Activated CD4-positive, alpha-beta T cell treated with anti-CD3 and anti-CD28 coated beads, Interleukin-2, amount 10 ng/mL, durations not matched to agents 24 days and 14 days (primary cell): ENCODE measurements at regions of chr5 and their contacts with region 1.

Region 1: GRCh38 chr5:170225326-170226128 is 7.3 kb upstream of the C5orf58 start:
- DNase-seq: peak; percentile 93
- H3K4me3 Mint-ChIP-seq: no peak overlapping the region
- H3K27ac Mint-ChIP-seq: peak overlapping the region; percentile 16
- H3K4me1 Mint-ChIP-seq: peaks cover 9% of the 10 kb centered on the region
- H3K27me3 Mint-ChIP-seq: no peaks in the 10 kb centered on the region

Region 2: GRCh38 chr5:170338933-170339779 is 113.6 kb after region 1 on chr5:
- intact Hi-C with region 1: loop called (anchors 1 kb)
- DNase-seq: peak; percentile 88
- H3K4me3 Mint-ChIP-seq: no peak overlapping the region
- H3K27ac Mint-ChIP-seq: peak overlapping the region; percentile 55
- H3K4me1 Mint-ChIP-seq: peaks cover 39% of the 10 kb centered on the region
- H3K27me3 Mint-ChIP-seq: no peaks in the 10 kb centered on the region

Region 3: GRCh38 chr5:170420780-170421412 is 195.4 kb after region 1 on chr5:
- intact Hi-C with region 1: loop called (anchors 1 kb)
- DNase-seq: peak; percentile 85
- H3K4me3 Mint-ChIP-seq: no peak overlapping the region
- H3K27ac Mint-ChIP-seq: no peak overlapping the region
- H3K4me1 Mint-ChIP-seq: peaks cover 6% of the 10 kb centered on the region
- H3K27me3 Mint-ChIP-seq: peaks cover 26% of the 10 kb centered on the region

Region 4: GRCh38 chr5:170638454-170639220 is 413.1 kb after region 1 on chr5:
- intact Hi-C with region 1: loop called (anchors 10 kb)
- DNase-seq: peak; percentile 89
- H3K4me3 Mint-ChIP-seq: no peak overlapping the region
- H3K27ac Mint-ChIP-seq: no peak overlapping the region
- H3K4me1 Mint-ChIP-seq: peaks cover 3% of the 10 kb centered on the region
- H3K27me3 Mint-ChIP-seq: peaks cover 12% of the 10 kb centered on the region